Mammary epithelial cell (primary cell): ENCODE measurements at regions of chr11 and their contacts with region 1.

Region 1: DNA sequence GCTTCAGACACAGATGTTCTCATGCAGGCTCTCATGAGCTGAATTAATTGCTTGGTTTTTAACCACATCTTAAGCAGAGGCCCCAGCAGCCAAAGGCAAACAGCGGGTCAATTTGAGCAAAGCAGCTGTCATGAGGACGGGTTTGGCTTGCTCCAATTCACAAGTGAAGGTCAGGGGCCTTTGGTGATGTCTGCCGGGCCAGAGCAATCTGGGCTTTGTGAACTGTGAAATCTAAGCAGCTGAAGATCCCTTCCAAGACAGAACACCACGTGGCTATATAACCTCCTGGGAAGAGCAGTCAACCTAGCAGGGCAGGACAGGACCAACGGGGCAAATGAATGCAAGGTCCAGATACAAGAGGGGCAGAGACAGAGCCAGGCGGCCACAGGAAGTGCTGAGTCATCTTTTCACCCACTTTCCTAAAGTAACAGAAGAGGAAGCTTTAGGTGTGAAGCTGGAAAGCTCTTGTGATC is 187.3 kb upstream of the B3GAT1 start:
- DNase-seq: no peak
- H3K4me3 ChIP-seq: no peak overlapping the region
- H3K27ac ChIP-seq: no peak overlapping the region
- H3K4me1 ChIP-seq: no peaks in the 10 kb centered on the region
- H3K27me3 ChIP-seq: no peaks in the 10 kb centered on the region
- CTCF ChIP-seq: no peak

Region 2: DNA sequence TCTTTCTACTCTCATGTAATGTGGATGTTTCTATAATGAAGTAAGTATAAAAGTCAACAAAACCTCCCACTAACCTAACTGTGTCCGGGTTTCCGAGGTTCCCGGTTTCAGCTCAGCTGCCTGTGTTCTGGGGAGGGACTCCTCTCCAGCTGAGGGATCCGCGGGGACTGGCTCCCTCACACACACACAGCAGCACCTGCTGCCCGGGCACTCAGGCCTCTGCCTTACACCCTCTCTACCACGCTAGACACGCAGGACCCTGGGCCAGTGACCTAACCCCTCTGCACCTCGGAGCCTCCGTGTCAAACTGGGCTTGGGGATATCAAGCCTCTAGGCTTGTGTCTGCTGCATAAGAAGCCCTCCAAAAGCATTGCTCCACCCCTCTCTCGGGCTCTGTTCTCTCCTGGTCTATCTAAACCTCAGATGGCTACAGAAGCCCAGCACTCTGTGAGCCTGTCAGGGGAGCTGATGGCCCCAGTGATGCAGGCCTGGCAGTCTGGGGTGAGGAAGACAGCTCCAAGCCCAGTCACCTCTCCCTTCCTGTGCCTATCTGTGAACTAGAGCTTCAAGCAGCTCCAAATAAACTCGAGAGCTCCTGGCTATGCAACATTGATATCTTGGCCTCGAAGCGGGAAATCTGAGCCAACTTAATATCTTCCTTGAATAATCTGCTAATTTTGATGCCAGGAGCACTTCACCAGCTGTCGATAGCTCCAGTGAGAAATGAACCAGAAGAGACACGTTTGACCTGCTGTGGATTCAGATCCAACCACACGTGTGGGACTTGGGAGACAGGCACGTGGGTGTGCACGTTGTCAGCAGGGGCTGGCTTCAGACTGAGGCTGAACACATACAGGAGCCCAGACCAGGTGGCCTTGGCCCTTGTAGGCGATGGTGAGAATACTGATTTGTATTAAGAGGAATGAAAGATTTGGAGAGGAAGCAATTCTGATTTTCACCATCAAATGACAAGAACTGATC is 45.4 kb after region 1 on chr11:
- CTCF ChIA-PET with region 1: no interaction called
- dilution Hi-C with region 1: loop called (anchors 5 kb)
- in situ Hi-C with region 1: no loop called
- intact Hi-C with region 1: no loop called
- DNase-seq: no peak
- H3K4me3 ChIP-seq: no peak overlapping the region
- H3K27ac ChIP-seq: no peak overlapping the region
- H3K4me1 ChIP-seq: no peaks in the 10 kb centered on the region
- H3K27me3 ChIP-seq: no peaks in the 10 kb centered on the region
- CTCF ChIP-seq: no peak